Activated T-helper 2 cell treated with anti-CD3 and anti-CD28 coated beads, Interferon-gamma antibody, Interleukin-2, Interleukin-4, amounts not matched to agents 10 μg/mL and 5 μg/mL and 100 μg/mL, durations not matched to agents 14 hours and 24 hours and 36 hours (primary cell): ENCODE measurements at regions of chr4 and their contacts with region 1.

Region 1: GRCh38 chr4:39977489-39978377 is at the start of gene PDS5A:
- DNase-seq: peak; percentile 89
- H3K4me3 Mint-ChIP-seq: peak within 1 kb of the TSS; percentile 93
- H3K27ac Mint-ChIP-seq: peak within 1 kb of the TSS; percentile 93
- H3K4me1 Mint-ChIP-seq: peaks cover 23% of the 10 kb centered on the region
- H3K27me3 Mint-ChIP-seq: no peaks in the 10 kb centered on the region
- total RNA-seq, gene PDS5A: 117 and 120 TPM in 2 replicates

Region 2: DNA sequence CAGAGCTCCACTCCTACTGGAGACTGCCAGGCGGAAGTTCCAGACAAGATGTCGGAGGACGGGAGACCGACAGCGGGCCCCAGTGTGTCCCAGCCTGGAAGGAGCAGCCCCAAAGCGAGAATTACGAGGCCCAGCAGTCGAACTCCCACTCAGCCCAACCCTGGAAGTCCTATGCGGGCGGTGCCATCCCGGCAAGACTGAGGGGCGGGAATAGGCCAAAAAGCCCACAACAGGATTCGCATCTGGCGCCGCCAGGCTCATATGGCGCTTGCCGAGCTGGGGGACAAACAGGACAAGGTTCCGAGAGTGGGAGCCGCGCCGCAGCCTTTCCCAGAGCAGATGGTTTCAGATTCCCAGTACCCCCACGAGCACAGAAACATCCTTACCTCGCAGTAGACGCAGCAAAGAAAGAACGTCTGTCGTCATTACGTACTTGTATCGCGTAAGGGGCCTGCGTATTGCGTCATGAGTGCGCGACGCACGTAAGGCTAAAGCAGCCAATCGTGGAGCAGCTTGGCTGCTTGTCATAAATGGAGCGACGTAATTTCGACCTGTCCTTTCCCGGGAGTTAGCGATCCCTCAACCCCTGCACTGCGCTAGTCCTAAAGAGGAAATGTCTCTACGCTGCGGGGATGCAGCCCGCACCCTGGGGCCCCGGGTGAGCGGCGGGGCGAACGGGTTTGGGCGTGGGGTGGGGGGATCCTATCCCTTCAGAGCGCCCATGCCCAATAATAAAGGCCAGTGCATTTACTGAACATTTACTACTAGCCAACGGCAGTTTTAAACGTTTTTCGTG is 519.0 kb before region 1 on chr4 and contains the starts of genes LIAS and RPL9:
- intact Hi-C with region 1: loop called (anchors 2 kb)
- DNase-seq: peak; percentile 93
- H3K4me3 Mint-ChIP-seq: peak within 1 kb of the TSS; percentile 95
- H3K27ac Mint-ChIP-seq: peak within 1 kb of the TSS; percentile 98
- H3K4me1 Mint-ChIP-seq: peaks cover 23% of the 10 kb centered on the region
- H3K27me3 Mint-ChIP-seq: no peaks in the 10 kb centered on the region
- total RNA-seq, gene LIAS: 19.1 and 19.8 TPM in 2 replicates
- total RNA-seq, gene RPL9: 1,761 and 1,779 TPM in 2 replicates

Region 3: GRCh38 chr4:39527273-39528060 is 450.3 kb before region 1 on chr4 and contains the start of gene UGDH:
- intact Hi-C with region 1: loop called (anchors 2 kb)
- DNase-seq: peak; percentile 90
- H3K4me3 Mint-ChIP-seq: peak within 1 kb of the TSS; percentile 98
- H3K27ac Mint-ChIP-seq: peak within 1 kb of the TSS; percentile 94
- H3K4me1 Mint-ChIP-seq: peaks cover 16% of the 10 kb centered on the region
- H3K27me3 Mint-ChIP-seq: no peaks in the 10 kb centered on the region
- total RNA-seq, gene UGDH: 34.8 and 40.1 TPM in 2 replicates

Region 4: DNA sequence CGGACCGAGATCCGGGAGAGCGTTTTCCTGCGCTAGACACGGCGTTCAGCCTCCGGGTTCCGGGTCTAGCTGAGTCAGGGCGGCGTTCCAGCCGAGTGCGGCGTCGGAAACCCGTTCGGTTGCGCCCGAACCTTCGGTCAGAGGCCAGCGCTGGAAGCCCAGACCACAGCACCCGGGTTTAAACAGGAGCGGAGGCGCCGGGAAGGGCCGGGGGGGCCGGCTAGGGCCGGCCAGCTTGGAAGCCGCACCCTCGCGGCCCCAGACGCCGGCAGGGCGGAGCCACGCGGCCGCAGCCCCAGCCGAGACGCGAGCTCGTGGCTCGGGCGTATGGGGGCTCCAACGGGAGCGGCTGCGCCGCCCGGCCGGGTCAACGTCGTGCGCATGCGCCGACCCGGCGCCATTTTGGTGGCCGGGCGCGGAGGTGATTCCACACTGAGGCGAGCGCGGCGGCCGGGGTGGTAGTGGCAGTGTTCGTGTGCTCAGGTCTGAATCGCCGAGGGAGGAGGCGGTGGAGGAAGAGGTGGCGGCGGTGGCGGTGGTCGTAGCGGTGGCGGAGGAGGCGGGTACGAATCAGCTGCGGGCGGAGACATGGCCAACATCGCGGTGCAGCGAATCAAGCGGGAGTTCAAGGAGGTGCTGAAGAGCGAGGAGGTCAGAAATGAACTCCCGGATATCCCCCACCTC is 279.9 kb before region 1 on chr4 and contains the start of gene UBE2K:
- intact Hi-C with region 1: loop called (anchors 1 kb)
- DNase-seq: peak; percentile 87
- H3K4me3 Mint-ChIP-seq: peak within 1 kb of the TSS; percentile 99
- H3K27ac Mint-ChIP-seq: peak within 1 kb of the TSS; percentile 98
- H3K4me1 Mint-ChIP-seq: peaks cover 25% of the 10 kb centered on the region
- H3K27me3 Mint-ChIP-seq: no peaks in the 10 kb centered on the region
- total RNA-seq, gene UBE2K: 94.1 and 94.8 TPM in 2 replicates

Region 5: DNA sequence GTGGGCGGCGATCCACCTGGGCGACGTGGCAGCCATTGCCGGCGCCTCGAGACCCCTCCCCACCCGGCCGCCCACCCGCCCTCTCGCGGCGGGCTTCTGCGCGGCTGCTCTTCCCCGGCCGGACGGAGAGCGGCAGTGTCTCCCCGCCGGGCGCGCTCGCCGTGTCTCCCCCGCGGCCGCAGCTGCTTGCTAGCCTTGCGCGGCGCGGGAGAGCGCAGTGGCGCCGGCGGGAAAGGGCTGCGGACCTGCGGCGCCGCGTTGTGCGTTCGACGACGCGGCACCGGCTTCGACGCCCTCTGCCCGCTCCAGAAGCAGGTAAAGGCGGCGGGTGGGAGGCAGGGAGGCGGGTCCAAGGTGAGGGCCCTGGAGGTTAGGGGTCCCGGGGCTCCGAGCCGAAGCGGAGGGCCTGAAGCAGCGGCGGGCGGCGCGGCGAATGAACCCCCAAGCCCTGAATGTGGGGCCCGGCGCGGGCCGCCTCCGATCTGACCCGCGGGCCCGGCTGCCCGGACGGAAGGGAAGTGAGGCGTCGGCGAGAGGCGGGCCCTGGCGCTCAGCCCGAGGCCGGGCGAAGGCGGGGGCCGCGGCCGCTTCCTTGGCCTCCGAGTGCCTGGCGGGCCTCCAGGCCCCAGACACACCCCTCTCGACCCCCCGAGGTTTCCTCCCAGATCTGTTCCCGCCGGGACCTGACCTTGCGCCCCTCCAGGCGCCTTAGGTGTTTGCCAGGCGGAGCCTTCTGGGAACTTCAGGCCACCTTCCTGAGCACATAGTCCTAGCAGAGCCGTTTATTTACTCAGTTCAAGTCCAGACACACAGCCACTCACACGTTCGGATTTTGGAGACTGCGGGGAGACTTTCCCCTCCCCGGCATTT is 79.2 kb after region 1 on chr4 and contains the start of gene N4BP2:
- intact Hi-C with region 1: loop called (anchors 2 kb)
- DNase-seq: peak; percentile 68
- H3K4me3 Mint-ChIP-seq: peak within 1 kb of the TSS; percentile 96
- H3K27ac Mint-ChIP-seq: peak within 1 kb of the TSS; percentile 99
- H3K4me1 Mint-ChIP-seq: peaks cover 25% of the 10 kb centered on the region
- H3K27me3 Mint-ChIP-seq: no peaks in the 10 kb centered on the region
- total RNA-seq, gene N4BP2: 23.2 and 23.8 TPM in 2 replicates

Region 6: DNA sequence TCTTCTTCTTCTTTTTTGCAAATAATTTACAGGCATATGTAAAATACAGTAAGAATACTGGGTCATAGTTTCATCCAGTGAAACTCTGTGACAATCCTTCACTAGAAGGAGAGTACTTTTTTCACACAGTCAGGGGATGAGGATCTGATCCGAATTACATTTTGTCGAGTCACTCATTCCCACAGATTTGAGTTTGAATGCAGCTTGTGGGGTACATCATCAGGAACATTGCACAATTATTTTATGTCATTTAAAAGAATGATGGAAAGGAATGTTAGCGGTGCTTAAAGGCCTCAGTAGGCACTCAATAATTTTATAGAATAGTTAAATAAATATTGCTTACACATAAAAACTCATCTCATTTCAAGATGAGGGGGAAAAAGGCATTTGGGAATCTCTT is 446.0 kb after region 1 on chr4:
- intact Hi-C with region 1: no loop called
- DNase-seq: no peak
- H3K4me3 Mint-ChIP-seq: no peak overlapping the region
- H3K27ac Mint-ChIP-seq: no peak overlapping the region
- H3K4me1 Mint-ChIP-seq: peaks cover 10% of the 10 kb centered on the region
- H3K27me3 Mint-ChIP-seq: no peaks in the 10 kb centered on the region